Sigmoid colon (tissue), 7 donors: ENCODE measurements at regions of chr1 and their contacts with region 1.

Region 1: GRCh38 chr1:112715264-112716053 is at the start of gene PPM1J:
- DNase-seq: peak; percentile 98
- H3K4me3 ChIP-seq: peak within 1 kb of the TSS; percentile 46 to 67 (median 52)
- H3K27ac ChIP-seq: peak within 1 kb of the TSS; percentile 61 to 74 (median 68)
- H3K4me1 ChIP-seq: peaks cover 0 to 35% (median 30%) of the 10 kb centered on the region in 4 donors
- H3K27me3 ChIP-seq: no peaks in the 10 kb centered on the region
- CTCF ChIP-seq: no peak
- EP300 ChIP-seq: no peak
- POLR2A ChIP-seq: no peak
- total RNA-seq, gene PPM1J: 0.36 to 1.6 (median 1.4) TPM

Region 2: DNA sequence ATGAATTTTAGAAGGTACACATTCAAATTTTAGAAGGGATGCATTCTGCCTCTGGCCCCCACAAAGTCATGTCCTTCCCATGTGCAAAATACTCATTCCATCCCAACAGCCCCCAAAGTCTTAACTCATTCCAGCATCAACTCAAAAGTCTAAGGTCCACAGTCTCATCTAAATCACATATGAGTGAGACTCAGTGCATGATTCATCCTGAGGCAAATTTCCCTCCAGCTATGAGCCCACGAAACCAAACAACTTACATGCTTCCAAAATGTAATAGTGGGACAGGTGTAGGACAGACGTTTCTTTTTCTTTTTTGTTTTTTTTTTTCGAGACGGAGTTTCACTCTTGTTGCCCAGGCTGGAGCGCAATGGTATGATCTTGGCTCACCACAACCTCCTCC is 219.2 kb before region 1 on chr1:
- intact Hi-C with region 1: no loop called
- DNase-seq: no peak
- H3K4me3 ChIP-seq: no peak overlapping the region
- H3K27ac ChIP-seq: no peak overlapping the region
- H3K4me1 ChIP-seq: no peaks in the 10 kb centered on the region
- H3K27me3 ChIP-seq: no peaks in the 10 kb centered on the region
- CTCF ChIP-seq: no peak
- EP300 ChIP-seq: no peak
- POLR2A ChIP-seq: no peak

Region 3: DNA sequence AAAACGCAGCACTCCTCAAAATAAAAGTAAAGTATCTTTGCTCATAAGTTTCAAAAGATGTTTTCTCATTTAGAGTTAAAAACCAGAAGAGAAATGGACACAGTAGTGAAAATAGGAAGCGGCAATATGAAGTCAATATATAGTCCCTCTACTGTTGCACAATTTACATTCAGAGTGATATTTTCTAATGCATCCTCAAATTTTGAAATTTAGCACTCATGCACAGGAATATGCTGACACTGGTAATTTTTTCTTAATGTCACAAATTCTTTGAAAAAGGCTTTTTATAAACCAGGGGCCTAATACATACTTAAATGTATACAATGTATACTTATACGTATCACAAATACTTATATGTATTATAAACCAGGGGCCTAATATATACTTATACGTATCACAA is 116.0 kb before region 1 on chr1:
- intact Hi-C with region 1: no loop called
- DNase-seq: no peak
- H3K4me3 ChIP-seq: no peak overlapping the region
- H3K27ac ChIP-seq: no peak overlapping the region
- H3K4me1 ChIP-seq: no peaks in the 10 kb centered on the region
- H3K27me3 ChIP-seq: no peaks in the 10 kb centered on the region
- CTCF ChIP-seq: no peak
- EP300 ChIP-seq: no peak
- POLR2A ChIP-seq: no peak

Region 4: GRCh38 chr1:112619520-112620376 is 95.7 kb before region 1 on chr1 and contains the start of gene CAPZA1:
- intact Hi-C with region 1: loop called (anchors 2 kb)
- DNase-seq: peak; percentile 96
- H3K4me3 ChIP-seq: peak within 1 kb of the TSS; percentile 63 to 97 (median 90)
- H3K27ac ChIP-seq: peak within 1 kb of the TSS; percentile 94 to 99 (median 96)
- H3K4me1 ChIP-seq: peaks cover 0 to 42% (median 36%) of the 10 kb centered on the region in 4 donors
- H3K27me3 ChIP-seq: no peaks in the 10 kb centered on the region
- CTCF ChIP-seq: no peak
- EP300 ChIP-seq: peak in 3 of 4 donors; percentile 1 to 47 (median 8)
- POLR2A ChIP-seq: peak; percentile 86 to 88
- total RNA-seq, gene CAPZA1: 75.9 to 90.6 (median 81.3) TPM

Region 5: GRCh38 chr1:112882271-112882744 is 166.8 kb after region 1 on chr1:
- intact Hi-C with region 1: loop called (anchors 5 kb)
- DNase-seq: no peak
- H3K4me3 ChIP-seq: no peak overlapping the region
- H3K27ac ChIP-seq: no peak overlapping the region
- H3K4me1 ChIP-seq: no peaks in the 10 kb centered on the region
- H3K27me3 ChIP-seq: no peaks in the 10 kb centered on the region
- CTCF ChIP-seq: no peak
- EP300 ChIP-seq: no peak
- POLR2A ChIP-seq: no peak

Region 6: GRCh38 chr1:113042285-113043143 is 327.1 kb after region 1 on chr1:
- intact Hi-C with region 1: loop called (anchors 2 kb)
- DNase-seq: peak; percentile 84
- H3K4me3 ChIP-seq: no peak overlapping the region
- H3K27ac ChIP-seq: peak overlapping the region in 1 of 4 donors; percentile 39
- H3K4me1 ChIP-seq: peaks cover 0 to 14% (median 10%) of the 10 kb centered on the region in 4 donors
- H3K27me3 ChIP-seq: no peaks in the 10 kb centered on the region
- CTCF ChIP-seq: peak; percentile 51 to 67 (median 60)
- EP300 ChIP-seq: no peak
- POLR2A ChIP-seq: no peak

Region 7: GRCh38 chr1:113811888-113812660 is 1096.6 kb after region 1 on chr1 and contains the start of gene RSBN1:
- intact Hi-C with region 1: loop called (anchors 10 kb)
- DNase-seq: peak; percentile 100
- H3K4me3 ChIP-seq: peak within 1 kb of the TSS; percentile 67 to 96 (median 84)
- H3K27ac ChIP-seq: peak within 1 kb of the TSS; percentile 93 to 98 (median 96)
- H3K4me1 ChIP-seq: peaks cover 0 to 33% (median 27%) of the 10 kb centered on the region in 4 donors
- H3K27me3 ChIP-seq: no peaks in the 10 kb centered on the region
- CTCF ChIP-seq: no peak
- EP300 ChIP-seq: peak in 1 of 4 donors; percentile 74
- POLR2A ChIP-seq: peak; percentile 64 to 92
- total RNA-seq, gene RSBN1: 15.5 to 33.9 (median 22.9) TPM